Spleen (tissue), 13 donors: ENCODE measurements at regions of chr3 and their contacts with region 1.

Region 1: GRCh38 chr3:148955544-148956346 is 35.6 kb upstream of the GYG1 start:
- DNase-seq: no peak
- H3K4me3 ChIP-seq: no peak overlapping the region
- H3K27ac ChIP-seq: peak overlapping the region in 7 of 8 donors; percentile 13 to 65 (median 36)
- H3K4me1 ChIP-seq: peaks cover 0 to 16% (median 0%) of the 10 kb centered on the region in 6 donors
- H3K27me3 ChIP-seq: no peaks in the 10 kb centered on the region
- CTCF ChIP-seq: peak; percentile 28 to 63 (median 49)
- POLR2A ChIP-seq: no peak

Region 2: GRCh38 chr3:149101641-149102040 is 145.9 kb after region 1 on chr3:
- intact Hi-C with region 1: no loop called
- DNase-seq: no peak
- H3K4me3 ChIP-seq: no peak overlapping the region
- H3K27ac ChIP-seq: no peak overlapping the region
- H3K4me1 ChIP-seq: no peaks in the 10 kb centered on the region
- H3K27me3 ChIP-seq: no peaks in the 10 kb centered on the region
- CTCF ChIP-seq: no peak
- POLR2A ChIP-seq: no peak

Region 3: GRCh38 chr3:149114458-149114857 is 158.7 kb after region 1 on chr3:
- intact Hi-C with region 1: loop called (anchors 10 kb)
- DNase-seq: no peak
- H3K4me3 ChIP-seq: no peak overlapping the region
- H3K27ac ChIP-seq: no peak overlapping the region
- H3K4me1 ChIP-seq: no peaks in the 10 kb centered on the region
- H3K27me3 ChIP-seq: no peaks in the 10 kb centered on the region
- CTCF ChIP-seq: no peak
- POLR2A ChIP-seq: no peak

Region 4: GRCh38 chr3:149273096-149273751 is 317.5 kb after region 1 on chr3:
- intact Hi-C with region 1: loop called (anchors 2 kb)
- DNase-seq: no peak
- H3K4me3 ChIP-seq: no peak overlapping the region
- H3K27ac ChIP-seq: no peak overlapping the region
- H3K4me1 ChIP-seq: peaks cover 0 to 23% (median 18%) of the 10 kb centered on the region in 6 donors
- H3K27me3 ChIP-seq: no peaks in the 10 kb centered on the region
- CTCF ChIP-seq: peak; percentile 80 to 98 (median 89)
- POLR2A ChIP-seq: no peak

Region 5: DNA sequence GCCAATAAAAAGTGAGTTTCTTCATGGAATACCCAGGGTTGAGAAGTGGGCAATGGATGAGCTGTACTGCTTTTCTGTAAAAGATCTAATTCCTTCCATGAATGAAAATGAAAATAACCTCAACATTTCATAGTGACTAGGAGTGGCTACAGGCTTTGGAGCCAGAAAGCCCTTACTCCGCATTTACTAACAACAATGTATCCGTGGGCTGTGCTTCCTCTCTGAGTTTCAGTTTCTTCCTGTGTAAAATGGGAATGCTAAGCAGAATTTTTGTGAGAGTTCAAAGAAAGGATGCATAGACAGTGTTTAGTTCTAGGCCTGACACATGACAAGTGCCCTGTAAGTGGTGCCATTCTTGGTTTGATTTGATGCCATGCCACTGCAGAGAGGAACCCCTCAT is 469.2 kb after region 1 on chr3:
- intact Hi-C with region 1: no loop called
- DNase-seq: no peak
- H3K4me3 ChIP-seq: no peak overlapping the region
- H3K27ac ChIP-seq: peak overlapping the region in 7 of 8 donors; percentile 37 to 75 (median 44)
- H3K4me1 ChIP-seq: peaks cover 0 to 24% (median 11%) of the 10 kb centered on the region in 6 donors
- H3K27me3 ChIP-seq: no peaks in the 10 kb centered on the region
- CTCF ChIP-seq: no peak
- POLR2A ChIP-seq: no peak